Mammary epithelial cell (primary cell): ENCODE measurements at regions of chr11 and their contacts with region 1.

Region 1: DNA sequence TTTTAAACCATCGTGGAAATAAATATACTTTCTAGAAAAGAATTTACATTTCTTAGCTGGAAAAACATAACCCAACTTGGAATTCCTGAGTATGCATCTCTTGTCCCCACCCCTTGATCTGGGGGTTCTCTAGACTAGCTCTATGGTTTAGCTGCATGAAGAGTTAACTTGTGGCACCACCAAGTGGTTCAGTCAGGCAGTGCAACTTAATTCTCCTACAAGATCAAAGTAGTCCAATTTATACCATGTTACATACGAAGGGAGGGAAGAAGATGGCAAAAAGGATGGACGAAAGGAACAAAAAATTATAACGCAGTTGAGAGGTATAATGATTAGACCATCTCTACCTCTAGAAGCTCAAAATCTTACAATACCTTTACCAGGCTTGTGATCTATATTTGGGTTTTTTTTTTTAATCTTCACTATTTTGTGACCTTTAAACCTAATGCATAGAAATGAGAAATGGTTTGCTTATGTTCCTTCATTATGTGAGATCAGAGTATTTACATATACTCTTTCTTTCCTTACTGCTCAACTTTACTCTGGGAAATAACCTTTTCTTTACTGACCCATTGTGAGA is 28.5 kb upstream of the ALKBH3 start:
- DNase-seq: peak; percentile 59
- H3K4me3 ChIP-seq: no peak overlapping the region
- H3K27ac ChIP-seq: no peak overlapping the region
- H3K4me1 ChIP-seq: peaks cover 5% of the 10 kb centered on the region
- H3K27me3 ChIP-seq: no peaks in the 10 kb centered on the region
- CTCF ChIP-seq: peak; percentile 84 to 87

Region 2: DNA sequence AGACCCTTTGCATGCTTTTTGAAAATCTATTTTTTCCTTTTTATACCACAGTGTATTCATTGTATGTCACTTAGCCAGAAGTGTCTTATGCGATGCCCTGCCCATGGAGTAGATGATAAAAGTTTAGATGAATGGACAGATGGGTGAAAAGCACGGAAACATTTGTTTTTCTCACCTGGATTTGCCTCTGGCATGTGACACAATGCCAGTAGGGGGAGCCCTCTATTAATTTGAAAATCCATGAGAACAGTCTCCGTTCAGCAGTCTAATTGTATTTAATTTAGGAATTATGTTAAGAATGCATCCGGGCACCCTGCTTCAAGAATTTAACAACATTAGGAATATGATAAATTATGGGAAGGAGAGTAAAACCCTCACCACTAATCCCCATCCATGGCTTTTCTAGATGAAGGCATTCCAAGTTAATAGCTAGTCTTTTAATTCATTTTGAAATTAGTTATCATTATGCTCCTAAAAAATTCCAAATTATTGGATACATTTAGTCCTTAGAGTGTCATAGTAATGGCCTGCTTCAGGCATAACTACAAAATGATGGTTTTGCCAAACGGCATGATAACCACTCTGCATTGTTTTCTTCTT is 26.8 kb before region 1 on chr11:
- CTCF ChIA-PET with region 1: interaction called, 9 read pairs
- dilution Hi-C with region 1: no loop called
- in situ Hi-C with region 1: no loop called
- intact Hi-C with region 1: loop called (anchors 1 kb)
- DNase-seq: peak; percentile 20
- H3K4me3 ChIP-seq: no peak overlapping the region
- H3K27ac ChIP-seq: no peak overlapping the region
- H3K4me1 ChIP-seq: peaks cover 8% of the 10 kb centered on the region
- H3K27me3 ChIP-seq: no peaks in the 10 kb centered on the region
- CTCF ChIP-seq: peak; percentile 70 to 74